ENCODE measurements at regions of chr2 and their contacts with region 1.

Region 1: DNA sequence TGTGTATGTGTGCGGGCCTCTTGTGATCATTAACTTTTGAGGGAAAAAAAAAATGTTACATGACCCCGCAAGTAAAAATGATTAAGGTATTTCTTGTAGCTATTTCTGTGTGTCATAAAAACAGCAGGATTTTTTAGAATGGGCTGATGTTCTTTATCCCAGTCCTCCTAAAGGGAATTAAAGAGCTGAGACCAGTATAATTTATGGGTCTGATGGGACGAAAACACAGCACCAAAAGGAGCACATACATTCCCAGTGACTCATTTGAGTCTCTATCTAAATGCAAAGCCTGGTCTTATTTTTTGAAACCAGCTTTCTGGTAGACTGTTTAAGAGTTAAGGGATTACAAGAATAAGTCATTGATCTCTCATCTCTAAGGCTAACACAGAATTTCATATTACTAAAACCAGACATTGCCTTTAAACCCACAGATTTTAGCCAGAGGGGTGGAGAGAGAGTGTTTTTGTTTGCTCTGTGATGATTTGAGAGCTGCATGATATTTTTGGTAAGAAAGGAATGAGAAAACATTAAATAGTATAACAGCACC is 342.3 kb upstream of the EPHA4 start:
- DNase-seq: no peak
- H3K4me3 ChIP-seq: no peak overlapping the region
- H3K27ac ChIP-seq: no peak overlapping the region
- H3K4me1 ChIP-seq: no peaks in the 10 kb centered on the region
- H3K27me3 ChIP-seq: no peaks in the 10 kb centered on the region
- CTCF ChIP-seq: no peak

Region 2: DNA sequence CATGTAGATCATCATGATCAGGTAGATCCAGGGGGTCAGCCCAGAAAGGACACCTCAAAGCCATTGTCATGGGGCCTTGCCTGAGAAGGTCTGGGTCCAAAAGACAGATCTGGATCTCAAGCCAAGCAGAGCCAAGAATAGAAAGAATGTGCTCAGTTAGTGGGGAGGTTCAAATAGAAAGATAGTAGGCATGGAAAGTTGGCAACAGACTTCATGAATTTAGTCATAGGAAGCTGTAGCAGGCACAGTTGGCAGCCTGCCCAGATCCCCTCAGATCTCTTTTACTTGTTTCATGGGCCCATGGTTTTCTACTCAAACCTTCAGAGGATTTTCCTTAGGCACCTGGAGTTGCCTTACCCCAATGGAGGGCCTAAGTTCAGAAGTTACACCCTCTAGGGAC is 1520.0 kb before region 1 on chr2:
- CTCF ChIA-PET with region 1: no interaction called
- POLR2A ChIA-PET with region 1: no interaction called
- intact Hi-C with region 1: no loop called
- DNase-seq: peak in 1 of 2 experiments; percentile 22
- H3K4me3 ChIP-seq: no peak overlapping the region
- H3K27ac ChIP-seq: no peak overlapping the region
- H3K4me1 ChIP-seq: no peaks in the 10 kb centered on the region
- H3K27me3 ChIP-seq: no peaks in the 10 kb centered on the region
- CTCF ChIP-seq: no peak

Region 3: DNA sequence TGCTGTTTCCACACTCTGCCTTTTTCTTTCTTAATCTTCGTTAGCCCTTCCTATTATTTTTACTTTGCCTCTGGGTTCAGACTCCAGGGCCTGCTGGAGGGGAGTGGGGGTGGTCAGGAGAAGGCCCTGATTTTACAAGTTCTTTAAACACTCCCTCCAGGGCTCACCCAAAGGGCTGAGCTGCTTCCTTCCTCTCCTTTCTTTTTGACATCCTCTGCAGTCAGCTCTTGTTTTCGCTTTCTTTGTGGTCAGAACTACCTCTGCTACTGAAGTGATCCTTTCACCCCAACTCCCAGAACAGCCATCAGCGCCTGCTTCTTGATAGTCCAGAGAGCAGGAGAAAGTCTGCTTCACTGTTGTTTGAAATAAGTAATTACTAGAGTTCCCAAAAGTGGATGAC is 1268.0 kb before region 1 on chr2:
- CTCF ChIA-PET with region 1: no interaction called
- POLR2A ChIA-PET with region 1: interaction called, 10 read pairs
- intact Hi-C with region 1: no loop called
- DNase-seq: no peak
- H3K4me3 ChIP-seq: no peak overlapping the region
- H3K27ac ChIP-seq: no peak overlapping the region
- H3K4me1 ChIP-seq: no peaks in the 10 kb centered on the region
- H3K27me3 ChIP-seq: no peaks in the 10 kb centered on the region
- CTCF ChIP-seq: no peak

Region 4: GRCh38 chr2:222076973-222077691 is 162.7 kb after region 1 on chr2:
- CTCF ChIA-PET with region 1: no interaction called
- POLR2A ChIA-PET with region 1: interaction called, 10 read pairs
- intact Hi-C with region 1: no loop called
- DNase-seq: no peak
- H3K4me3 ChIP-seq: no peak overlapping the region
- H3K27ac ChIP-seq: no peak overlapping the region
- H3K4me1 ChIP-seq: no peaks in the 10 kb centered on the region
- H3K27me3 ChIP-seq: peaks cover 30% of the 10 kb centered on the region
- CTCF ChIP-seq: no peak